Esophagus muscularis mucosa (tissue), 4 donors: ENCODE measurements at regions of chr10 and their contacts with region 1.

Region 1: DNA sequence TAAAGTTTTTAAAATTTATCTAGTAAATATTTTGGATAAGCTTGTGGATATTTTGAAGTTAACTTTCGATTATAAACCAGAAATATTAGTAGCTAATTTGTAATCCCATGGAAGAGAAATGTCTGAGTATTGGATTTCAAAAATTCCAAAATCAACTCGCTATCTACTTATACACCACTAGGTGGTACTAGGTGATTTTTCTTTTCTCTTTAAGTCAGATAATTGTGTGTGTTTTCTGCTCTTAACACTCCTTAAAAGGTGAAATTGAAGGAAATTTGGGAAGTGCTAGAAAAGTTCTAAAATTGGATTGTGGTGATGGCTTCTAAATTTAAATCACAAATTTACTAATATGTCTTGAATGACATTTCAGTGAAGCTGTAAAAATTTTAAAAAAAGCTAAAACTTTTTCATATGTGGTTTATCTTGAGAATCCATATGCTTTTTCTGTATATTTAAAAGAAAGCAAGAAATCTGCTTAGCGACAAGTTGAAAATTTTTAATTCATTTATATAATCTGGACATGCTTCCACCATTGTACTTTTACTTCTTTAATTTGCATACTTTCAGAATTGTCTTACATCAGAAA is 90.2 kb downstream of the IPMK start:
- DNase-seq: no peak
- H3K4me3 ChIP-seq: no peak overlapping the region
- H3K27ac ChIP-seq: no peak overlapping the region
- H3K4me1 ChIP-seq: peaks cover 0 to 10% (median 4%) of the 10 kb centered on the region in 4 donors
- H3K27me3 ChIP-seq: no peaks in the 10 kb centered on the region
- CTCF ChIP-seq: peak; percentile 54 to 66 (median 61)
- EP300 ChIP-seq: no peak
- POLR2A ChIP-seq: no peak

Region 2: DNA sequence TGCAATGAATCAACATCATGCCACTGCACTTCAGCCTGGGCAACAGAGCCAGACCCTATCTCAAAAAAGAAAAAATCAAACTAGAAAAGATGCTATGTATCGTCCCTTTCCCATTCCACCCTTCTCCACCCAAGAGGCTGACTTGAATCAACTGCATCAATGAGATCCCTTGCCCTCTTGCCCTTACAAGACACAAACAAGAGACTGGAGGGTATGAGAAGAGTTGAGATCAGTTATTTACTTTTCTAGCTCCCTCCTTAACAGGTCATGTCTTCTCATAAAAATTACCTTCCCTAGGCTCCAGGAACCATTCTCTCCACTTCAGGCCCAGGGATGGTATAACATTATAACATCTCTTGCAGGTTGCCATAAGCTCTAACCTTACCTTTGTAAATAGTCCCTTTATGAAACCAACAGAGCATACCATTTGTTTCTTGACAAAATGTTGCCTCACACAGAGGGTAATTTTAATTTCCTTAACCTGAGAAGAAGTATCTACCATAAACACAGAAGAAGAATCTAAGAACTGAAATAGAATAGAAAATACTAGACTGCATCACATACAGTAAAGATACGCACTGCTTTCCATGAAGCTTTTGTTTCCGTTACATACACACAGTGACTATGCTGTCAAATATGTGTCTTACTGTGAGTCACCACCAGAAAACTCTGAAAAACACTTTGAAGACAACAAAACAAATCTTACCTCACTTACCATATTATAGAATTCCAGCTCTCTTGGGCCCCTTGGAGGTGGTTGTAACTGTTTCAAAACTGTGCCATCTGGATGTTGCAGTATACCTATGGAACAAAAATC is 59.8 kb after region 1 on chr10:
- intact Hi-C with region 1: no loop called
- DNase-seq: no peak
- H3K4me3 ChIP-seq: no peak overlapping the region
- H3K27ac ChIP-seq: no peak overlapping the region
- H3K4me1 ChIP-seq: no peaks in the 10 kb centered on the region
- H3K27me3 ChIP-seq: no peaks in the 10 kb centered on the region
- CTCF ChIP-seq: no peak
- EP300 ChIP-seq: no peak
- POLR2A ChIP-seq: no peak

Region 3: DNA sequence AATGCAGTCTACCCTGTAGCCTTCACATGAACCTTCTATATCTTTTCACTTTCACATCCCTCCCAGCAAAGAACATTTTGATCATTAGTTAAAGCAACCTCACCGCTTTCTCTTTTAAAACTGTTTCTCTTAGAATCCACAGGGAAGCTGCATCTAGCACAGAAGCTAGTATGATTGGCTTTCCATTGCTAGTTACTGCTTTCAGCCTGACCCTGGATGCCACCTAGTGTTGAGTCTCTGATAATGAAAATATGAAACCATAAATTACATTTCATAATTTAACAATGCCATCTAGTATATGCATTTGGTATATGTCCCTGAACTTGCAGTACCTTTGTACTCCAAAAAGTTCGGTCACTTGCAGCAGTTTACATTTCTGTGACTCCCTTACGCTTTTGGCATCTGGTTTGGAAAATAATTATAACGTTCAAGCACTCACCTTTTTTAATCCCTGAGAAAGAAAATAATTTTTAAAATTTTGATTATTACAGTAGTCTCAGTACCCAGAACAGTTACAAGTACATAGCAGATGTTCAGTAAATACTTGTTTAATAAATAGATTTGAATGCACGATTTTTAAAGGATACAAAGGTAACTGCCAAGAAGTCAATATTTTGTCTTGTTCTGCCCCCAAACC is 114.2 kb after region 1 on chr10:
- intact Hi-C with region 1: loop called (anchors 2 kb)
- DNase-seq: no peak
- H3K4me3 ChIP-seq: no peak overlapping the region
- H3K27ac ChIP-seq: no peak overlapping the region
- H3K4me1 ChIP-seq: no peaks in the 10 kb centered on the region
- H3K27me3 ChIP-seq: no peaks in the 10 kb centered on the region
- CTCF ChIP-seq: peak; percentile 69 to 74 (median 71)
- EP300 ChIP-seq: no peak
- POLR2A ChIP-seq: no peak